Caco-2 (cell line): ENCODE measurements at regions of chr1 and their contacts with region 1.

Region 1: DNA sequence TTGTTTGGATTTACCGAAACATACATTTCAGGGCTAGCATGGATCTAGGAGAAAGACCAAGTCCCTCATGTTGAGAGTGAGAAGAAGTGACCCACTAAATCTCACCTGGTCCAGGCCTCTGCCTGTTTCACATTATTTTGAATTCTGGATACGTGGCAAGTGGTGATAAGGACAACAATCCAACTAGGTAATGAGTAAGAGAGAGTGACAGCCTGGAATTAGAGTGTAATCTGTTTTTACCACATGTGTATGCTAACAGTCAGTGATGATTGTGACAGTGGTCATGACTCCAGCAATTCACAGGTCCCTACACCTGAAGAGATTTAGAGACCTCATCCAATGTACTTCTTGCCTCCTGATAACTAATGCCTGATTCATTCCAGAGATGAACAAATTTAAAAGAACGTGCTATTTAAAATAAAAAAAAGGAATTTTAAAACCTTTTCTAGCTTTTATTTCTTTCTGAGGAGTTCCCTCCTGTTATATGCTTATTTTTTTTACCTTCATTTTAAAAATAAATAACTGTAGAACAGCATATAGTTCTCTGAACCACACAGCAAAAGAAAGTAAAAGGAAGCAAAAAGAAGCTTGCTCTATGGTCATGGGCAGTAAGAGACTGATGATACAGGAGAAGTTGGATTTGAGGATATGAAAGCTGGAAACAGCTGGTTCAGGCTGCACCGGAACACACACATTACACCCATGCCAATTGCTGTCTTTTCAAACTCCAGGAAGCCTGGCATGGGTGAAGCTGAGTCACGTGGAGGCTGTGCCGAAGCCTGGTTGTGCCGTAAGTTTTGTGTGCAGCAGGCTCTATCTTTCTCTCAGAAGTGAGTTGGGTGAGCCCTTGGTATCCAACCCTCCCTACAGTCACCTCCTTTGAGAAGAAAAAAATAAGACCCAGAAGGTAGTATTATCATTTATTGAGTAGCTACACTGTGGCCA is 14.7 kb downstream of the C1orf116 start:
- DNase-seq: no peak
- H3K4me3 ChIP-seq: no peak overlapping the region
- H3K4me3 Mint-ChIP-seq: no peak overlapping the region
- H3K27ac Mint-ChIP-seq: no peak overlapping the region
- H3K4me1 ChIP-seq: peaks cover 32% of the 10 kb centered on the region
- H3K4me1 Mint-ChIP-seq: peaks cover 31% of the 10 kb centered on the region
- H3K27me3 ChIP-seq: no peaks in the 10 kb centered on the region
- H3K27me3 Mint-ChIP-seq: no peaks in the 10 kb centered on the region
- CTCF ChIP-seq: no peak

Region 2: GRCh38 chr1:207007352-207008033 is 10.4 kb before region 1 on chr1:
- CTCF ChIA-PET with region 1: no interaction called
- POLR2A ChIA-PET with region 1: interaction called, 3 read pairs
- intact Hi-C with region 1: loop called (anchors 1 kb)
- DNase-seq: peak; percentile 76 to 81
- H3K4me3 ChIP-seq: no peak overlapping the region
- H3K4me3 Mint-ChIP-seq: peak overlapping the region; percentile 31
- H3K27ac Mint-ChIP-seq: peak overlapping the region; percentile 97
- H3K4me1 ChIP-seq: peaks cover 72% of the 10 kb centered on the region
- H3K4me1 Mint-ChIP-seq: peaks cover 49% of the 10 kb centered on the region
- H3K27me3 ChIP-seq: no peaks in the 10 kb centered on the region
- H3K27me3 Mint-ChIP-seq: no peaks in the 10 kb centered on the region
- CTCF ChIP-seq: no peak

Region 3: DNA sequence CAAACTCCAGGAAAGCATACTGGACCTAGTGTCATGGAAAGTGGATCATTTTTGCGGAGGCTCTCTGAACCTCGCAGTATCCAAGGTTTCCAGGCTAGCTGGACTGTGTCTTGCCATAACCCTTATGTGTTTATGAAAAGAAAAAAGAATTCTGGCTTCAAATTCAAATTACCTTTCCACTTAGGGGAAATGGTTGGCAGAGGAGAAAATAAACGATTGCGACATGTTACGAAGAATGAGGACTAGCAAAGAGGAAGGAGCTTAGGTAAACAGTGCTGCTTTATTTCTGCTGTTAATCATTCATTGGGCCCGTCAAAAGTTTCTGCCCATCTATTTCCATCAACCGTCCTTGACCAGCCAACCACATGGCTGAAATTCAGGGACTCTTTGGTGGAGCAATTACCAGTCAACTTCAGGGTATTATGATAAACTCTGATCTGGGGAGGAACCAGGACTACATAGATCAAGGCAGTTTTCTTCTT is 86.0 kb after region 1 on chr1 and contains the start of gene C4BPA:
- CTCF ChIA-PET with region 1: no interaction called
- POLR2A ChIA-PET with region 1: no interaction called
- intact Hi-C with region 1: no loop called
- DNase-seq: peak; percentile 46 to 54
- H3K4me3 ChIP-seq: no peak within 1 kb of the TSS
- H3K4me3 Mint-ChIP-seq: peak within 1 kb of the TSS; percentile 42
- H3K27ac Mint-ChIP-seq: peak within 1 kb of the TSS; percentile 34
- H3K4me1 ChIP-seq: peaks cover 27% of the 10 kb centered on the region
- H3K4me1 Mint-ChIP-seq: peaks cover 30% of the 10 kb centered on the region
- H3K27me3 ChIP-seq: no peaks in the 10 kb centered on the region
- H3K27me3 Mint-ChIP-seq: no peaks in the 10 kb centered on the region
- CTCF ChIP-seq: no peak
- total RNA-seq, gene C4BPA: 10.6 and 12.7 TPM in 2 replicates